ENCODE measurements at regions of chr17 and their contacts with region 1.

Region 1: GRCh38 chr17:68777243-68777855 is 176.2 kb upstream of the FAM20A start:
- DNase-seq: peak; percentile 88
- ATAC-seq: peak; percentile 78
- H3K4me3 ChIP-seq: peak overlapping the region; percentile 24 to 58 (median 43); a peak in 5 of 6 replicates
- H3K27ac ChIP-seq: peak overlapping the region; percentile 75
- H3K4me1 ChIP-seq: peaks cover 63% of the 10 kb centered on the region
- H3K27me3 ChIP-seq: no peaks in the 10 kb centered on the region
- CTCF ChIP-seq: peak; percentile 92
- EP300 ChIP-seq: peak in 1 of 2 experiments; percentile 53; a peak in 1 of 4 replicates
- POLR2A ChIP-seq: no peak
- RAD21 ChIP-seq: peak; percentile 93

Region 2: GRCh38 chr17:68740555-68741447 is 36.5 kb before region 1 on chr17:
- CTCF ChIA-PET with region 1: no interaction called
- POLR2A ChIA-PET with region 1: no interaction called
- in situ Hi-C with region 1: no loop called
- intact Hi-C with region 1: no loop called
- DNase-seq: no peak
- ATAC-seq: peak; percentile 81
- H3K4me3 ChIP-seq: no peak overlapping the region
- H3K27ac ChIP-seq: no peak overlapping the region
- H3K4me1 ChIP-seq: no peaks in the 10 kb centered on the region
- H3K27me3 ChIP-seq: peaks cover 0 to 13% of the 10 kb centered on the region in 2 experiments; a peak in 3 of 5 replicates
- CTCF ChIP-seq: peak; percentile 50
- EP300 ChIP-seq: no peak
- POLR2A ChIP-seq: no peak
- RAD21 ChIP-seq: no peak

Region 3: GRCh38 chr17:68759343-68760132 is 17.8 kb before region 1 on chr17:
- CTCF ChIA-PET with region 1: no interaction called
- POLR2A ChIA-PET with region 1: no interaction called
- in situ Hi-C with region 1: no loop called
- intact Hi-C with region 1: no loop called
- DNase-seq: peak; percentile 91
- ATAC-seq: peak; percentile 99
- H3K4me3 ChIP-seq: peak overlapping the region; percentile 60 to 67 (median 61)
- H3K27ac ChIP-seq: peak overlapping the region; percentile 92
- H3K4me1 ChIP-seq: peaks cover 35% of the 10 kb centered on the region
- H3K27me3 ChIP-seq: 0 out of 5 replicates have a peak, but pooled peaks cover 0 to 4% of the 10 kb centered on the region in 2 experiments
- CTCF ChIP-seq: peak; percentile 97
- EP300 ChIP-seq: peak in 1 of 2 experiments; percentile 58; a peak in 2 of 4 replicates
- POLR2A ChIP-seq: peak; percentile 63 to 90; a peak in 3 of 4 replicates
- RAD21 ChIP-seq: peak; percentile 97

Region 4: DNA sequence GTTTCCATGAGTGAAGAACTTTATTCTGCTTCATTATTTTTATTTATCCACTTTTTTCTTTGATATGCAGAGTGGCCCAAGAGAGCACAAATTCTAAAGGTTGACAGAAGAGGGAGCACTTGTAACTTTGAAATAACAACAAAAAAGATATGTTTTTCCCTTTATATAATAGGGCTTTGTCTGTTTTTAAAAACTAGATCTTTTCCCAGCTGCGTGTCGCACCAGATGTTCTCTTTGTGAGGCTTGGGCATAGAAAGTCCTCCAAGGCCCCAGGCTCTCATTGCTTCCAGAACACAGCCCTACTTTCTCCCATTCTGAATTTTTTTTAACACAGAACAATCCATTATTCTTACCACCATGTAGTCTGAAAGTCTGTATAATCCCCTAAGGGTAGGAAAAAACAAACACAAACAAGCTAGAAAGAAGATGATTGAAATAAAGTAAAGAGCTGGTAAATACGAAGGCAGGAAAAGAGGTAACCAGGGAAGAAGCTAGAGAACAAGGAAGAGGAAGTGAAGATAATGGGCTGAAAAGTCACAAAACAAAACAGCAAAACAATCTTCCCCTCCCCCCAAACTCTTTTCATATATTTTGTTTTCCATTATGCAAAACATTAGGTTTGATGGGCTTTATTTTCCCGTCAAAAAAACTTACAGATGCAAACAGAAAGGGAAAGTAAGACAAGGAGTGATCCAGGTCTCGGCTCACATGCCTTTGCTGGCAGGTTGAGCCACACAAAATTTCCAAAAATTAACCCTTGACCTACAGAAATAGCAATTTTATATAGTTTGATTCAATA is 17.5 kb after region 1 on chr17:
- CTCF ChIA-PET with region 1: interaction called, 6 read pairs
- POLR2A ChIA-PET with region 1: interaction called, 52 read pairs
- in situ Hi-C with region 1: no loop called
- intact Hi-C with region 1: loop called (anchors 2 kb)
- DNase-seq: peak; percentile 41
- ATAC-seq: no peak; the same call in 2 of the 3 replicates
- H3K4me3 ChIP-seq: no peak overlapping the region
- H3K27ac ChIP-seq: peak overlapping the region; percentile 97
- H3K4me1 ChIP-seq: peaks cover 62% of the 10 kb centered on the region
- H3K27me3 ChIP-seq: no peaks in the 10 kb centered on the region
- CTCF ChIP-seq: no peak
- EP300 ChIP-seq: no peak
- POLR2A ChIP-seq: no peak
- RAD21 ChIP-seq: no peak

Region 5: GRCh38 chr17:68861602-68862001 is 84.3 kb after region 1 on chr17:
- CTCF ChIA-PET with region 1: no interaction called
- POLR2A ChIA-PET with region 1: no interaction called
- in situ Hi-C with region 1: no loop called
- intact Hi-C with region 1: loop called (anchors 5 kb)
- DNase-seq: no peak
- ATAC-seq: no peak
- H3K4me3 ChIP-seq: no peak overlapping the region
- H3K27ac ChIP-seq: no peak overlapping the region
- H3K4me1 ChIP-seq: 0 out of 2 replicates have a peak, but pooled peaks cover 5% of the 10 kb centered on the region
- H3K27me3 ChIP-seq: no peaks in the 10 kb centered on the region
- CTCF ChIP-seq: no peak
- EP300 ChIP-seq: no peak
- POLR2A ChIP-seq: no peak
- RAD21 ChIP-seq: no peak

Region 6: DNA sequence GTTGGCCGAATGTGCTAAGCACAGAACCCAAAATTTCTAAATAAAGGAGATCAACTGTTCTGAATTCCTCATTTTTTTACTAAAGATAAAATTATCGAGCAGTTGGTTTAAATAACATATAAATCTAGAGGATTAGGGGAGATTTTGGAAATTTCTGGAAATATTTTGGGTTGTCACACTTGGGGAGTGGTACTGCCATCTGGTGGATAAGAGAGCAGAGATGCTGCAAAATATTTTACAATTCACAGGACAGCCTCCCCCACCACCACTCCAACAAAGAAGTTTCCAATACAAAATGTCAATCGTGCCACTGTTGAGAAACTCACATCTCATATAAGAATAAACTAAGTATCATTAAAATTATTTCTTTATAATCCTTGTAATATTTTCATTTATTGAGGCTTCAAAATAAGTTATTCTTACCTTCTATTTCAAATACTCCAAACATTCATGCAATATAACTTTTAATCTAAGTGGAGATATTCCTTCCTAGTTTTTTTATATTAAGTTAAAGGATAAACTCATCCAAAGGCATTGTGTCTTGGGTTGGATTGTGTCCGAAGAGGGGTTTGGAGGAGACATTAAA is 194.9 kb after region 1 on chr17:
- CTCF ChIA-PET with region 1: interaction called, 33 read pairs
- POLR2A ChIA-PET with region 1: no interaction called
- in situ Hi-C with region 1: loop called (anchors 5 kb)
- intact Hi-C with region 1: loop called (anchors 1 kb)
- DNase-seq: peak; percentile 43
- ATAC-seq: no peak
- H3K4me3 ChIP-seq: no peak overlapping the region
- H3K27ac ChIP-seq: no peak overlapping the region
- H3K4me1 ChIP-seq: 0 out of 2 replicates have a peak, but pooled peaks cover 10% of the 10 kb centered on the region
- H3K27me3 ChIP-seq: no peaks in the 10 kb centered on the region
- CTCF ChIP-seq: peak; percentile 73
- EP300 ChIP-seq: peak in 1 of 2 experiments; percentile 38; a peak in 1 of 4 replicates
- POLR2A ChIP-seq: no peak
- RAD21 ChIP-seq: peak; percentile 85

Region 7: GRCh38 chr17:69235338-69235930 is 458.1 kb after region 1 on chr17:
- CTCF ChIA-PET with region 1: interaction called, 117 read pairs
- POLR2A ChIA-PET with region 1: interaction called, 8 read pairs
- in situ Hi-C with region 1: loop called (anchors 5 kb)
- intact Hi-C with region 1: loop called (anchors 1 kb)
- DNase-seq: peak; percentile 88
- ATAC-seq: peak; percentile 100
- H3K4me3 ChIP-seq: no peak overlapping the region
- H3K27ac ChIP-seq: no peak overlapping the region
- H3K4me1 ChIP-seq: peaks cover 14% of the 10 kb centered on the region
- H3K27me3 ChIP-seq: no peaks in the 10 kb centered on the region
- CTCF ChIP-seq: peak; percentile 97
- EP300 ChIP-seq: no peak
- POLR2A ChIP-seq: no peak
- RAD21 ChIP-seq: peak; percentile 98

Measured in HepG2 (cell line).